Esophagus muscularis mucosa (tissue), 4 donors: ENCODE measurements at regions of chr13 and their contacts with region 1.

Region 1: GRCh38 chr13:107211073-107211472 is 643.1 kb upstream of the ARGLU1 start:
- DNase-seq: no peak
- H3K4me3 ChIP-seq: peak overlapping the region in 1 of 4 donors; percentile 3
- H3K27ac ChIP-seq: no peak overlapping the region
- H3K4me1 ChIP-seq: peaks cover 0 to 9% (median 3%) of the 10 kb centered on the region in 4 donors
- H3K27me3 ChIP-seq: no peaks in the 10 kb centered on the region
- CTCF ChIP-seq: peak; percentile 65 to 90 (median 69)
- EP300 ChIP-seq: no peak
- POLR2A ChIP-seq: no peak

Region 2: DNA sequence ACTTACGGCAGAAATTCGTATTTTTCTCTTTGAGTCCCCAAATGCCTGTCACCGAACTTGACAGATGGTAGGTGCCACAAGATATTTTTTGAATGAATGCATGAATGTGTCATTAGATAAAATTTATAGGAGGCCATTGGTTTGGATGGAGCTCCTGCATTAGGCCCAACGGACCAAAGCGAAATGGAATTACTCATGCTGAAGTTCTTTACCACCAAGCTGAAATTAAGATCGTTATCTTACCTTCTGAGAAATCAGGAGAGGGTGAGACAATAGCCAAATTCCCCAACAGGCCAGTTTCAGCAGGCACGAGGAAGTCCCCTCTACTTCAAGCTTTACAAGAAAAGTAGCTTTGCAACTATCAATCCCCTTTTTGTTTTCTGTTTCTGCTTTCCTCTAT is 190.7 kb before region 1 on chr13:
- intact Hi-C with region 1: no loop called
- DNase-seq: no peak
- H3K4me3 ChIP-seq: no peak overlapping the region
- H3K27ac ChIP-seq: no peak overlapping the region
- H3K4me1 ChIP-seq: peaks cover 0 to 5% (median 0%) of the 10 kb centered on the region in 4 donors
- H3K27me3 ChIP-seq: no peaks in the 10 kb centered on the region
- CTCF ChIP-seq: no peak
- EP300 ChIP-seq: no peak
- POLR2A ChIP-seq: no peak

Region 3: GRCh38 chr13:107284173-107284572 is 73.1 kb after region 1 on chr13:
- intact Hi-C with region 1: no loop called
- DNase-seq: no peak
- H3K4me3 ChIP-seq: no peak overlapping the region
- H3K27ac ChIP-seq: no peak overlapping the region
- H3K4me1 ChIP-seq: no peaks in the 10 kb centered on the region
- H3K27me3 ChIP-seq: no peaks in the 10 kb centered on the region
- CTCF ChIP-seq: no peak
- EP300 ChIP-seq: no peak
- POLR2A ChIP-seq: no peak

Region 4: GRCh38 chr13:107568181-107568580 is 357.1 kb after region 1 on chr13:
- intact Hi-C with region 1: loop called (anchors 5 kb)
- DNase-seq: no peak
- H3K4me3 ChIP-seq: no peak overlapping the region
- H3K27ac ChIP-seq: no peak overlapping the region
- H3K4me1 ChIP-seq: no peaks in the 10 kb centered on the region
- H3K27me3 ChIP-seq: no peaks in the 10 kb centered on the region
- CTCF ChIP-seq: no peak
- EP300 ChIP-seq: no peak
- POLR2A ChIP-seq: no peak

Region 5: DNA sequence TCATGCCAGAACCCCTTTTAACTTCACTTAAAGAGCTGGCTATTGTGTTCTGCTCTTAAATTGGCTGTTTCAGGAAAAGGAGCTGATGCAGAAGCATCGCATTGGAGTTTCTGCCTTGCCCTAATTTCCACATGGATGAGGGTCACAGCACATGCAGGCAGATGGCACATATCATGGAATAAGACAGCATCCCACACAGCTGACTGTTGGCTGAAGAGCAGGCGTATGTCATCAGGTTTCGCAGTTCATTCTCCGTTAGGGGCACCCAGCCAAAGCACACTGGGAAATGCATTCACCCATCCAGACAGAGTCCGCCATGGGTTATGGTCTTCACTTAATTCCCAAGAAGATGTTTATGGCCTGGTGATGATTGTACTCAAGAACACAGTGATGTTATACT is 431.8 kb after region 1 on chr13:
- intact Hi-C with region 1: loop called (anchors 10 kb)
- DNase-seq: no peak
- H3K4me3 ChIP-seq: no peak overlapping the region
- H3K27ac ChIP-seq: no peak overlapping the region
- H3K4me1 ChIP-seq: no peaks in the 10 kb centered on the region
- H3K27me3 ChIP-seq: peaks cover 0 to 4% (median 0%) of the 10 kb centered on the region in 4 donors
- CTCF ChIP-seq: no peak
- EP300 ChIP-seq: no peak
- POLR2A ChIP-seq: no peak